Sigmoid colon (tissue), 7 donors: ENCODE measurements at regions of chr4 and their contacts with region 1.

Region 1: GRCh38 chr4:81030061-81030980 is at the start of gene BMP3:
- DNase-seq: peak; percentile 86
- H3K4me3 ChIP-seq: peak within 1 kb of the TSS; percentile 56 to 77 (median 66)
- H3K27ac ChIP-seq: peak within 1 kb of the TSS; percentile 65 to 86 (median 82)
- H3K4me1 ChIP-seq: peaks cover 0 to 15% (median 5%) of the 10 kb centered on the region in 4 donors
- H3K27me3 ChIP-seq: peaks cover 0 to 15% (median 0%) of the 10 kb centered on the region in 3 donors
- CTCF ChIP-seq: no peak
- EP300 ChIP-seq: no peak
- POLR2A ChIP-seq: peak; percentile 31 to 42
- total RNA-seq, gene BMP3: 30.5 to 63.1 (median 40.7) TPM

Region 2: GRCh38 chr4:80471756-80472155 is 558.6 kb before region 1 on chr4:
- intact Hi-C with region 1: loop called (anchors 5 kb)
- DNase-seq: peak; percentile 71
- H3K4me3 ChIP-seq: peak overlapping the region in 3 of 4 donors; percentile 10 to 35 (median 33)
- H3K27ac ChIP-seq: peak overlapping the region in 2 of 4 donors; percentile 21 to 39
- H3K4me1 ChIP-seq: peaks cover 0 to 3% (median 0%) of the 10 kb centered on the region in 4 donors
- H3K27me3 ChIP-seq: no peaks in the 10 kb centered on the region
- CTCF ChIP-seq: no peak
- EP300 ChIP-seq: no peak
- POLR2A ChIP-seq: no peak

Region 3: DNA sequence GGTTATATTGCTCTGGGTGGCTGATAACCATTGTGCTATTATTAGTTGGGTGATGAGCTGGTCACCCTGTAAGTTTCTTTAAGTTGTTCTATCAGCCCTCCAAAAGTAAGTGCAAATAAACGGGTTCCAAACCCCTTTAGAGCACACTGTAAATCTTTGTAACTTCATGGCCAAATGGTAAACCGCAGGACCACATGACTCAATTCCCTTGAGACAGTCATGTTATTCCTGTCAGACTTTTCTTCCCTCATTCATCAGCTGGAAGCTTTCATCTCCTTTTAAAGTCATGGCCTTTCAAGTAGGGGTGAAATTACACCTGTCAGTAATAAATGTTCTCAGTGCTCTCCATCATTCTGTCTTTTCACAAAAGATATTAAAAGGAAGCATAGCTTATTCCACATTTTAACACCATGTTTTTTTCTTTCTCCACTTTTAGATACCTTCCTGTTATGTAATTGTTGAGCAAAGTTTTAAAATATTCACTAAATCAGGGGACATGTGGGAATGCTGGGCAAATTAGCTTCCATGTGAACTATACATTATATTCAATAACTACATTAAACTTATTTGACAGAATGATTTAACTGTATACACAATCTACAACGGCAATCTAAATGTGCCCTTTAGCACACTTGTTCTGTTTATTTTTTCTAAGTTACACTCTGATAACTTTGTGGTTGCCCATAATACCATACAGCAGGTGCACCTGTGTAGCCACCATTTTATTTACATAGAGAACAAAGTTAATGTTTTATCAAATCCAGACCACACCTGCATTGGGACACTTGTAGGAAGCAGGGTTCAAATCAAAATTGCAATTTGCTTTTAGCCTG is 419.3 kb before region 1 on chr4:
- intact Hi-C with region 1: loop called (anchors 10 kb)
- DNase-seq: no peak
- H3K4me3 ChIP-seq: no peak overlapping the region
- H3K27ac ChIP-seq: no peak overlapping the region
- H3K4me1 ChIP-seq: peaks cover 0 to 28% (median 8%) of the 10 kb centered on the region in 4 donors
- H3K27me3 ChIP-seq: no peaks in the 10 kb centered on the region
- CTCF ChIP-seq: no peak
- EP300 ChIP-seq: no peak
- POLR2A ChIP-seq: no peak

Region 4: GRCh38 chr4:80713409-80713808 is 316.9 kb before region 1 on chr4:
- intact Hi-C with region 1: loop called (anchors 5 kb)
- DNase-seq: peak; percentile 76
- H3K4me3 ChIP-seq: no peak overlapping the region
- H3K27ac ChIP-seq: peak overlapping the region in 3 of 4 donors; percentile 57 to 74 (median 70)
- H3K4me1 ChIP-seq: peaks cover 0 to 62% (median 48%) of the 10 kb centered on the region in 4 donors
- H3K27me3 ChIP-seq: no peaks in the 10 kb centered on the region
- CTCF ChIP-seq: no peak
- EP300 ChIP-seq: no peak
- POLR2A ChIP-seq: no peak